Right ventricle myocardium inferior (tissue), 1 donor: ENCODE measurements at regions of chr2 and their contacts with region 1.

Region 1: GRCh38 chr2:236569573-236569973 is at the start of gene ACKR3:
- DNase-seq: peak; percentile 83
- ATAC-seq: peak; percentile 81
- total RNA-seq, gene ACKR3: 30.5 TPM

Region 2: GRCh38 chr2:236352761-236353593 is 216.6 kb before region 1 on chr2:
- intact Hi-C with region 1: loop called (anchors 5 kb)
- DNase-seq: no peak
- ATAC-seq: no peak

Region 3: DNA sequence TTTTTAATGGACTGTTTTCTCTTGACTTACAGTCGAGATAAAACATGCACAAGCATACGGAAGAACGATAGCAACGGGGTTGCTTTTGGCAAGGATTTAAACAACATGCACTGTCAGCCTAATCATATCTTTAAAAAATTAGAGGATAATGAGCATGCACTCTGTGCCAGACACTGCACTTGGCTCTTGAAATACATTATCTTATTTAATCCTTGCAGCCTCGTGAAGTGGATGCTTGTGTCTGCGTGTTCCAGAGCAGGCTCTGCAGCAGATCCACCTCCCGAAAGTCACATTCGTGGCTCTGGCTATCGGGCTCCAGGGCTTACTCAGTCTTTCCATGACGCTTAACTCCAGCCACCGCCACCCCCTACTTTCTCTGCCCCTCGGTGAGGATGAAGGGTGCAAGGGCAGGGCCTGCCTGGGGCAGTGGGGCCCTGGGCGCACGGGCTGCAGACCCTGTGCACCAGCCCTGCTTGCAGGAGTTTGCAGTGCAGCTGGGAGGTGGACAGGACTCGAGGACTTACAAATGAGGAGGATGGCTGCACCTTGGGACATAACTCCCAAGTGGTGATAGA is 61.8 kb after region 1 on chr2:
- intact Hi-C with region 1: loop called (anchors 2 kb)
- DNase-seq: no peak
- ATAC-seq: peak; percentile 29

Region 4: GRCh38 chr2:236731878-236732580 is 162.5 kb after region 1 on chr2:
- intact Hi-C with region 1: loop called (anchors 2 kb)
- DNase-seq: peak; percentile 86
- ATAC-seq: peak; percentile 96

Region 5: DNA sequence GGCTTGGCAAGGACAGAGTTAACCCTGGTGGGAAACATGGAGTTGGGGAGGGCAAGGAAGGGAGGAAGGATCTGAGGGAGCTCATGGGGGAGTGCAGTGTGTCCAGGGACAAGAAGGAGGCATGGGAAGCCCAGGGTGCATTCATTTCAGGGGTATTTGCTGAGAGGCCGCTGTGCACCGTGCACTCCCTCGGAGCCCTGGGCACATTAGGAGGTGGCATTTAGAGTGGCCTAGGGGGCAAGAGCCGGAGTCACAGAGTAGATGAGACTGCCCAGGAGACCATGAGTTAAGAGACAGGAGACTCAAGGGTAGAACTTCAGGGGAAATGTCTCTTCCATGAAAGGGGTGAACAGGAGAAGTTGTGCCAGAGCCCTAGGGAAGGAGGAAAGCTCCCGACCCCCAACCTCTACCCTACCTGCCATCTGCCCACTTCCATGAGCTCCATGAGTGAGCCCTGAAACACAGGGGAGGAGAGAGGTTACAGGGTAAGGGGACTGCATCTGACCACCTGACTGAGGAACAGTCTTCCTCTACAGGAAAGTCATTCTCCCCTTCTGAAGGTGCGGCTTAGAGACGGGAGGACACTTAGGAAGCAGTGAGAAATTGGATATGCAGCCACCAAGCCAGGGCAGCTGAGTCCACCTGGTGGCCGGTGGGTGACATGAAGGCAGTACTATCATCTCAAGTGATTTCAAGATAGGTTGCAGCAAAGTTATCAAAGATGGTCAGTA is 457.6 kb after region 1 on chr2:
- intact Hi-C with region 1: loop called (anchors 5 kb)
- DNase-seq: peak; percentile 80
- ATAC-seq: peak; percentile 87